K562 (cell line): ENCODE measurements at regions of chr7 and their contacts with region 1.

Region 1: DNA sequence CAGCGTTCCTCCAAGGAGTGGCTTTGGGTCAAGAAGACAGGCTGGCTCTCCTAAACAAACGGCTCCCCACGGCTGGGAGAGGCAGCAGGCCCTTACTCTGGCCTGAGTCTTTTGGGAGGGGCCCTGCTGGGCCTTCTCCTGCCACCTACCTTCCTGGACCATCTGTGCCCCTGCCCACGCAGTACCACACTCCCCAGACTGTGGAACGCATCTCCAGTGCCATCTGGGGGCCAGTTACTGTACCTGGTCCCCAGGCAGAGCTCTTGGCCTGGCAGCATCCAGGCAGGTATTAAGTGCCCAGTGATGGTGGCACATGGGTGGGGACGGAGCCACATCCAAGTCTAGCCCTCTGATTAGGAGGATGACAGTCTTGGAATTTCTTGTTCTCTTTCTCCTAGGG is 14.4 kb downstream of the ALKBH4 start:
- DNase-seq: no peak
- ATAC-seq: no peak
- H3K4me3 ChIP-seq: no peak overlapping the region
- H3K27ac ChIP-seq: no peak overlapping the region
- H3K4me1 ChIP-seq: peaks cover 11 to 40% of the 10 kb centered on the region in 2 experiments
- H3K27me3 ChIP-seq: no peaks in the 10 kb centered on the region
- CTCF ChIP-seq: peak in 2 of 3 experiments; percentile 15 to 28; a peak in 1 of 6 replicates
- EP300 ChIP-seq: no peak
- POLR2A ChIP-seq: no peak
- RAD21 ChIP-seq: no peak; a peak in 1 of 4 replicates

Region 2: DNA sequence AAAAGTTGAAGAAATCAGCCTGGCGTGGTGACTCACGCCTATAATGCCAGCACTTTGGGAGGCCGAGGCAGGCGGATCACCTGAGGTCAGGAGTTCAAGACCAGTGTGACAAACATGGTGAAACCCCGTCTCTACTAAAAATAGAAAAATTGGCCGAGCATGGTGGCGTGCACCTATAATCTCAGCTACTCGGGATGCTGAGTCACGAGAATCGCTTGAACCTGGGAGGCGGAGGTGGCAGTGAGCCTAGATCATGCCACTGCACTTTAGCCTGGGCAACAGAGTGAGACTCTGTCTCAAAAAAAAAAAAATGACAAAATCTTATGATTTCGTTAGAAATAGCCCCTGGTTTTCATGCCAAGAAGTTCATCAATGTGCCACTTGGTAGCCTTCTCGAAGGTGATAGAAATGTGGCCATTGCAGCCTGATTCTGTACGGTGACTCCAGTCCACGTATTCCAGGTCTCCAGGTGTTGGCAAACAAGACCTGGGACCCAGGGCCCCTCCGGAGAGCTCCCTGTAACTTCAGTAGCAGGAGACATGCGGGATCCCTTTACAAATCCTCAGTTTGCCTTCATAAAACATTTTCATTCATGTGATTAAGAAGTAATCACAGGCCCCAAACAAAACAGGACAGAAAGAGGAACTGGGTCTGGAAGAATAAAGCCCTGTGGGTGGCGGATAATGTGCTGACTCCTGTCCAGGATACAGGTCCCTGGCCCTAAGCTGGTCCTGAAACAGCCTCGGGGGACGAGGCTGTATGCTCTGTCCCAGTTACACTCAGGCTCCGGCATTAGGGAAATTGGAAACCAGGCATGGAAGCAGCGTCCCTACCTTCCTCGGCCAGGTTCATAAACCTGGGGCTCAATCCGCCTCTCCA is 370.9 kb before region 1 on chr7:
- CTCF ChIA-PET with region 1: no interaction called
- POLR2A ChIA-PET with region 1: no interaction called
- in situ Hi-C with region 1: no loop called
- intact Hi-C with region 1: no loop called
- DNase-seq: peak in 2 of 4 experiments; percentile 25 to 45
- ATAC-seq: peak; percentile 18
- H3K4me3 ChIP-seq: no peak overlapping the region
- H3K27ac ChIP-seq: peak overlapping the region; percentile 96
- H3K4me1 ChIP-seq: peaks cover 29 to 35% of the 10 kb centered on the region in 2 experiments; a peak in 4 of 5 replicates
- H3K27me3 ChIP-seq: no peaks in the 10 kb centered on the region
- CTCF ChIP-seq: no peak
- EP300 ChIP-seq: no peak
- POLR2A ChIP-seq: no peak
- RAD21 ChIP-seq: no peak

Region 3: GRCh38 chr7:102403563-102403962 is 46.7 kb before region 1 on chr7:
- CTCF ChIA-PET with region 1: interaction called, 6 read pairs
- POLR2A ChIA-PET with region 1: no interaction called
- in situ Hi-C with region 1: no loop called
- intact Hi-C with region 1: loop called (anchors 2 kb)
- DNase-seq: no peak
- ATAC-seq: no peak
- H3K4me3 ChIP-seq: no peak overlapping the region
- H3K27ac ChIP-seq: no peak overlapping the region
- H3K4me1 ChIP-seq: no peaks in the 10 kb centered on the region; a peak in 1 of 5 replicates
- H3K27me3 ChIP-seq: no peaks in the 10 kb centered on the region
- CTCF ChIP-seq: no peak
- EP300 ChIP-seq: no peak
- POLR2A ChIP-seq: no peak
- RAD21 ChIP-seq: no peak

Region 4: DNA sequence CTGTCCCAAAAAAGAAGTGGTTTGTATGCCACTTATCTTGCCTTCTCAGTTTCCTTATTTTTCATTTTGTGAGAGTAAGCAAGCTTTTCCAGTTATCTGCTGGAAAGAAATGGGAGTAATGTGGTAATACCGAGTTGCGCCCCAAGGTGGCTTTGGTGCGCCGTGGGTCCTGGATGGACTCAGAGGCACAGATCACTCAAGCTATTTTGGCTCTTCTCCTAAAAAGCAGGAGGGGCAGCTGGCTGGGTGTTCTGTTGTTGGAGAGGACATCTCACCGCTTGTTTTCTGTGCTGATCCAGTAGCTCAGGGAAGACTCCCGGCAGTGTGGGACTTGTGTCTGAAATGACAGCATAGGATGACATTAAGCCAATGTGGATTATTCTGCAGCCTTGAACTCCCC is 37.7 kb before region 1 on chr7:
- CTCF ChIA-PET with region 1: interaction called, 3 read pairs
- POLR2A ChIA-PET with region 1: interaction called, 3 read pairs
- in situ Hi-C with region 1: no loop called
- intact Hi-C with region 1: loop called (anchors 1 kb)
- DNase-seq: peak; percentile 66 to 75 (median 68)
- ATAC-seq: peak; percentile 85
- H3K4me3 ChIP-seq: no peak overlapping the region
- H3K27ac ChIP-seq: no peak overlapping the region
- H3K4me1 ChIP-seq: peaks cover 0 to 4% of the 10 kb centered on the region in 2 experiments; a peak in 3 of 5 replicates
- H3K27me3 ChIP-seq: no peaks in the 10 kb centered on the region
- CTCF ChIP-seq: peak; percentile 70 to 86 (median 78)
- EP300 ChIP-seq: no peak
- POLR2A ChIP-seq: no peak
- RAD21 ChIP-seq: peak; percentile 60 to 81